OCI-LY7 (cell line): ENCODE measurements at regions of chr2 and their contacts with region 1.

Region 1: DNA sequence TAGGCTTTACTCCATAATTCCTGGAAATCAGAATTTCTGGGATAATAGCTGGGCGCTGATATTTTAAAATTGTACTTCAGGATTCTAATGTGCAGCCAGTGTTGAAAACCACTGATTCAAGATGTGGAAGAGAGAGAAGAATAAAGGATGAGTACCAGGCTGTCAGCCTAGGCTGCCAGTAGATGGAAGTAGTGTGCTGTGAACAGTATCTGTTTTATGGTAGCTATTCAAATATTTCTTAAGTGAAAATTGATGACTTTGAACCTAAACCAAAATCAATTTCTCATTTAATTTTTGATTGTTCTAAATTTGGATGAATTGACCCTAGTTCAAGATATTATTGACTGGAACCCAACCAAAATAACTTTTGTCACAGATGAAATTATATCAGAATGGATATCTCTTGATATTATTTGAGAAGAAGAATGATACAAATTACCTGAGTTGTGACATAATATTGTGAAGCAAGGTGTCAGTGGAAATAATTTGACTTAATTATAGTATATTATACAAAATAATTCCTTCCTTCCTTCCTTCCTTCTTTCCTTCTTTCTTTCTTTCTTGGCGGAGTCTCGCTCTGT is 88.1 kb downstream of the COMMD1 start:
- DNase-seq: peak; percentile 80
- H3K4me3 ChIP-seq: no peak overlapping the region
- H3K27ac ChIP-seq: no peak overlapping the region
- H3K4me1 ChIP-seq: peaks cover 49% of the 10 kb centered on the region
- CTCF ChIP-seq: peak; percentile 99

Region 2: GRCh38 chr2:61910603-61911002 is 82.9 kb before region 1 on chr2:
- CTCF ChIA-PET with region 1: no interaction called
- POLR2A ChIA-PET with region 1: no interaction called
- intact Hi-C with region 1: loop called (anchors 5 kb)
- DNase-seq: peak; percentile 15
- H3K4me3 ChIP-seq: no peak overlapping the region
- H3K27ac ChIP-seq: no peak overlapping the region
- H3K4me1 ChIP-seq: peaks cover 4% of the 10 kb centered on the region
- CTCF ChIP-seq: peak; percentile 68; the same call in 1 of the 2 replicates

Region 3: DNA sequence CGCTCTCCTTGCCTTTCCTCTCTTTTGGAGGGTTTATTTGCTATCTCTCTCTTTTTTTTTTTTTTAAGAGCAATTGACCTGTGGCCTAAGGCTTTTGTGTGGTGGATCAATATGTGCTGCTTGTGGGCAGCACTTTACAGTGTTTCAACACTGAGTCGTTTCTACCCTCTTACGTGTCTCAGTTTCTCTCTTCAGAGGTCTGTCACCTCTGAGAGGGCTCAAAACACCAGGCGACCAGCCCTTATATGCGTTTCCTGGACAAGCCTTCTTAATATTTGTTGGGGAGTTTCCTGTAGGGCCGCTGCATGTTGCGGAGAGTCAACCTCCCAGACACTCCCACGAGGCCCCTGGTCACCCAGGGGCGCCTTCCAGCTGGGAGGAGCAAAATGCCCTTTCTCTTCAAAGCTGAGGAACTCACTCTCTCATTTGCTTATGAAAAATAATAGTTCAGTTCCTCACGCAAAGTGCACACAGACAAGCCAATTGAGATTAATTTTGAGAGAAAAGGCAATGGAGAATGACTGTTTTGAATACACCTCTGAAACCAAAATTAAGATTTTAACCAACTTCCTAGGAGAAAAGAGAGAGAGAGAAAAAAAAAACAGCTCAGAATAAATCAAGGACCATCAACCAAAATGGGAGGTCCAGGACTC is 106.1 kb after region 1 on chr2:
- CTCF ChIA-PET with region 1: no interaction called
- POLR2A ChIA-PET with region 1: no interaction called
- intact Hi-C with region 1: no loop called
- DNase-seq: peak; percentile 49
- H3K4me3 ChIP-seq: peak overlapping the region; percentile 34
- H3K27ac ChIP-seq: peak overlapping the region; percentile 15
- H3K4me1 ChIP-seq: peaks cover 30% of the 10 kb centered on the region
- CTCF ChIP-seq: no peak